Activated T-helper 2 cell treated with anti-CD3 and anti-CD28 coated beads, Interferon-gamma antibody, Interleukin-2, Interleukin-4, amounts not matched to agents 10 μg/mL and 5 μg/mL and 100 μg/mL, durations not matched to agents 14 hours and 24 hours and 36 hours (primary cell): ENCODE measurements at regions of chr10 and their contacts with region 1.

Region 1: GRCh38 chr10:124719213-124719851 is 24.8 kb downstream of the FAM53B start:
- DNase-seq: peak; percentile 47
- H3K4me3 Mint-ChIP-seq: peak overlapping the region; percentile 47
- H3K27ac Mint-ChIP-seq: peak overlapping the region; percentile 58
- H3K4me1 Mint-ChIP-seq: peaks cover 76% of the 10 kb centered on the region
- H3K27me3 Mint-ChIP-seq: peaks cover 2% of the 10 kb centered on the region

Region 2: DNA sequence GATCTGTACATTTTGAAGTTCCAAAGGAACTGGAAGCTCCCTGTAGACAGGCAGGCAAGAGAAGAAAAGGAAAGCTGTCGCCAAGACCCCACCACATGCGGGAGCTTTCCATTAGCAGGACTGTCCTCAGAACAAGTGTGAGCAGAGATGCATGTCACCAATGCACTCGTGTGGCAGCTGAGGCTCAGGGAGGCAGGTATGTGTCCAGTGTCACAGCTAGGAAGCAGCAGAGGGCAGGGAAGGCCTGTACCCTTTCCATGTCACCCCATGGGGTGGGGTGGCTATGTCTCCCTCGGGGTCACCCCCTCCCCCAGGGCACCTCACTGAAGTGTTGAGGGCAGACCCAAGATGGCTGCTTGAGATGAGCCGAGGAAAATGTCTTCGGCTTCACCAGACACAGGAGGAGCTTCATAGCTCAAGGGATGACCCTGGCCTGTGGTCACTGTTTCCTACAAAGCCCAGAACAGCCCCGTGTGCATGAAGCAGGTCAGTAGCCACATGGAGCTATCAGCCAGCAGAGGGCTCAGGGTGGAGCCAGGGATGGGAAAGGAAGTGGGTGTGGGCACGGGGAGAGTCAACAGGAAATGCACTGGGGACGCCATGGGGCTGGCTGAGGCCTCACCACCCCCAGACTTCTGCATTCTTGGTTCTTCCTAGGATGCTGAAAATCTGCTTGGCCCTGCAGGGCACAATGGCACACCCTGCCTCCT is 71.8 kb before region 1 on chr10:
- intact Hi-C with region 1: loop called (anchors 1 kb)
- DNase-seq: peak; percentile 70
- H3K4me3 Mint-ChIP-seq: peak overlapping the region; percentile 54
- H3K27ac Mint-ChIP-seq: peak overlapping the region; percentile 84
- H3K4me1 Mint-ChIP-seq: peaks cover 58% of the 10 kb centered on the region
- H3K27me3 Mint-ChIP-seq: no peaks in the 10 kb centered on the region

Region 3: GRCh38 chr10:124677749-124678556 is 41.4 kb before region 1 on chr10:
- intact Hi-C with region 1: no loop called
- DNase-seq: no peak
- H3K4me3 Mint-ChIP-seq: no peak overlapping the region
- H3K27ac Mint-ChIP-seq: no peak overlapping the region
- H3K4me1 Mint-ChIP-seq: peaks cover 24% of the 10 kb centered on the region
- H3K27me3 Mint-ChIP-seq: no peaks in the 10 kb centered on the region

Region 4: DNA sequence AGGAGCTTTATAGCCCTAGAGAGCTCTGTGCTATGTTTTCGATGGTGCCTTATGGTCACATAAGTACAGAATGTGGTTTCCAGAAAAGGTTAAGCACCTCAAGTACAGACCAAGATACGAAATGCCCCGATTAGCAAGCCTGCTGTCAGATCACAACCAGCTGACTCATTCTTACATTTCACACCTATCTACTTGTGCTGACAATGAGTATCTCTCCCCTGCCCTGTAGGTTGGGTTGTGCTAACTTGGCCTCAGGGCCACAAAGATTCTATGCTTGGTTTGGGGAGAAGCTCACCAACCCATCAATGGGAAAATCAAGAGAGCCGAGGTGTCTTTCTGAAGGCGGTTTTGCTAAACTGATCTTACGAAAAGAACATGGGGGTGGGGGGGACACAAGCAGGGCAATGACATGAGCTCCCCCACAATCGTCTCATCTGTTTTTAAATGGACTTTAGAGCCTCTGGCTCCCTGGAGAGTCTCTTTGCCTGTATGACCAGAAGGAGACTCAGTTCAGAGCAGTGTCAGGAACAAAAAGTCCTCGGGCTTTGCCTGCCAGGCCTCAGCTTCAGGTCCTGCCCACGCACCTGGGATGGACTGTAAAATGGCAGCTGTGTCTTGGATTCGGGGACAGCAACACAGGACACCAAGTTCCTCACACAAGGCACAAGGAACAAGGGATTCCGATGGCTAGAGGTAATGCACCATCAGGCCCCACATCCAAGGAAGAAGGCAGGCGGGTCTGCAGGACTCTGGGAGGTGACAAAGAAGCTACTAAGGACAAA is 30.3 kb before region 1 on chr10:
- intact Hi-C with region 1: loop called (anchors 1 kb)
- DNase-seq: peak; percentile 48
- H3K4me3 Mint-ChIP-seq: peak overlapping the region; percentile 26
- H3K27ac Mint-ChIP-seq: peak overlapping the region; percentile 80
- H3K4me1 Mint-ChIP-seq: peaks cover 69% of the 10 kb centered on the region
- H3K27me3 Mint-ChIP-seq: no peaks in the 10 kb centered on the region

Region 5: GRCh38 chr10:124697830-124698544 is 21.3 kb before region 1 on chr10:
- intact Hi-C with region 1: loop called (anchors 1 kb)
- DNase-seq: no peak
- H3K4me3 Mint-ChIP-seq: no peak overlapping the region
- H3K27ac Mint-ChIP-seq: peak overlapping the region; percentile 94
- H3K4me1 Mint-ChIP-seq: peaks cover 90% of the 10 kb centered on the region
- H3K27me3 Mint-ChIP-seq: no peaks in the 10 kb centered on the region

Region 6: GRCh38 chr10:124732931-124733570 is 13.7 kb after region 1 on chr10:
- intact Hi-C with region 1: loop called (anchors 1 kb)
- DNase-seq: no peak
- H3K4me3 Mint-ChIP-seq: peak overlapping the region; percentile 34
- H3K27ac Mint-ChIP-seq: peak overlapping the region; percentile 77
- H3K4me1 Mint-ChIP-seq: peaks cover 57% of the 10 kb centered on the region
- H3K27me3 Mint-ChIP-seq: no peaks in the 10 kb centered on the region

Region 7: DNA sequence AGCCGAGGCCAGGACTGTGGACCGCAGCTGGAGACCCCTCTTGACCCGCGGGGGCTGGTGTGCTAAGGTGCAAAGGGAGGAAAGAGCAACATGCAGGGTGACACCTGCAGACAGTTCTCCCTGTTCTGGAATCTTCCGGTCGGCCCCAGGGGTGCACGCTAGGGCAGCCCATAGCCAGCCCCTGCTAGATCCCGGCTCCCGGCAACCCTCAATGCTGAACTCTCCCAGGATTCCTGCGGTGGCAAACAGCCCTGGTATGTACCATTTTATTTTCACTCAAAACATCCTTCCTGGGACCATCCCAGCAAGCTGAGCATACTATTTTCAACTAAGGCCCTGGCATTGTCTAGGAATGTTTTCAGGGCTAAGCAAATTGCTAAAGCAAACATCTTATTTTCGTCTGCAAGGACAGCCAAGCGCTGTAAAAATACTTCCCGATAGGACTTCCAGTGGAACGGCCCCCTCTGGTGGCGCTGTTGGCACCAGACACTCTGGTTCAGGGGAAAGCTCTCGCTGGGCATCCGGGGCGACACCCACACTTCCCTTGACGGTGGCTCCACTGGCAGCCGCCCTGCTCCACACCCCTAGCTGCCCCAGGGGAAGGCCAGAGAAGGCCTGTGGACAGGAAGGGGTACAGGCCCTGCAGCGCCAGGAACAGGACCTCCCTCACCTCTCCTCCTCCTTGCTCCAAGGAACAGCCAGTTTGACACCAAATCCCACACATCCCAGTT is 341.7 kb after region 1 on chr10:
- intact Hi-C with region 1: loop called (anchors 10 kb)
- DNase-seq: no peak
- H3K4me3 Mint-ChIP-seq: no peak overlapping the region
- H3K27ac Mint-ChIP-seq: no peak overlapping the region
- H3K4me1 Mint-ChIP-seq: peaks cover 16% of the 10 kb centered on the region
- H3K27me3 Mint-ChIP-seq: peaks cover 23% of the 10 kb centered on the region